ENCODE measurements at regions of chr9 and their contacts with region 1.

Region 1: GRCh38 chr9:87494970-87495471 is 2.6 kb upstream of the DAPK1 start:
- DNase-seq: no peak
- ATAC-seq: no peak
- H3K4me3 ChIP-seq: no peak overlapping the region
- H3K27ac ChIP-seq: peak overlapping the region in 2 of 4 donors; percentile 26 to 62
- H3K4me1 ChIP-seq: peaks cover 24% of the 10 kb centered on the region
- H3K27me3 ChIP-seq: no peaks in the 10 kb centered on the region
- CTCF ChIP-seq: no peak
- POLR2A ChIP-seq: no peak

Region 2: GRCh38 chr9:87342743-87343142 is 152.3 kb before region 1 on chr9:
- intact Hi-C with region 1: loop called (anchors 5 kb)
- DNase-seq: peak in 3 of 4 donors; percentile 15 to 38 (median 24)
- ATAC-seq: no peak
- H3K4me3 ChIP-seq: no peak overlapping the region
- H3K27ac ChIP-seq: no peak overlapping the region
- H3K4me1 ChIP-seq: peaks cover 5% of the 10 kb centered on the region
- H3K27me3 ChIP-seq: no peaks in the 10 kb centered on the region
- CTCF ChIP-seq: no peak
- POLR2A ChIP-seq: no peak

Region 3: GRCh38 chr9:87354147-87354546 is 140.9 kb before region 1 on chr9:
- intact Hi-C with region 1: no loop called
- DNase-seq: no peak
- ATAC-seq: no peak
- H3K4me3 ChIP-seq: no peak overlapping the region
- H3K27ac ChIP-seq: no peak overlapping the region
- H3K4me1 ChIP-seq: no peaks in the 10 kb centered on the region
- H3K27me3 ChIP-seq: no peaks in the 10 kb centered on the region
- CTCF ChIP-seq: no peak
- POLR2A ChIP-seq: no peak